Activated CD4-positive, alpha-beta memory T cell treated with anti-CD3 and anti-CD28 coated beads for 36 hours (primary cell): ENCODE measurements at regions of chr4 and their contacts with region 1.

Region 1: DNA sequence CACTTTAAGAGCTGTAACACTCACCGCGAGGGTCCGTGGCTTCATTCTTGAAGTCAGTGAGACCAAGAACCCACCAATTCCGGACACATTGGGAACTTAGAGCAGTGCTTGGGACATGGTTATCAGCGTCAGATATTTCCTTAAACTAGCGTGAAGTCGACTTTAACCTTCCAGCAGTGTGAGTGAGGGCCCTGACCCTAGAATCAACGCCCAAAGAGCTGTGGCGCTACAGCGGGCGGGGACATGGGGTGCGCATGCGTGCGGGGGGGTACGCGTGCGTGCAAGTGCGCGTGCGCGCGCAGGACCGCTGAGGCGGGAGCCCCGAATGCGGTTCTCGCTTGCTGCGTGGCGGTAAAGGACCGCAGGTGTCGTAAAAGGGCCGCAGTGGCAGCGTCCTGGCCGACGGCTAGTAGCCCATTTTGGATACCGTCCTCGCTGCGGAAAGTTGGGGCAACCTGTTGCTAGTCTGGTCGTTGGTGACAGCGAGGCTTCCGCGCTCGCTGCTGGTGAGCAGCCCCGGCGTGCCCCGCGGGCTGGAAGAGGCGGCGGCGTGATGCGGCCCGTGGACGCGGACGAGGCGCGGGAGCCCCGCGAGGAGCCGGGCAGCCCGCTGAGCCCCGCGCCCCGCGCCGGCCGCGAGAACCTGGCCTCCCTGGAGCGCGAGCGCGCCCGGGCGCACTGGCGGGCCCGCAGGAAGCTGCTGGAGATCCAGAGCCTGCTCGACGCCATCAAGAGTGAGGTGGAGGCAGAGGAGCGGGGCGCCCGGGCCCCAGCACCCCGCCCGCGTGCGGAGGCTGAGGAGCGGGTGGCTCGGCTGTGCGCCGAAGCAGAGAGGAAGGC is 19.8 kb upstream of the S100P start:
- DNase-seq: peak; percentile 96
- H3K4me3 Mint-ChIP-seq: peak overlapping the region; percentile 95
- H3K27ac Mint-ChIP-seq: peak overlapping the region; percentile 93
- H3K4me1 Mint-ChIP-seq: peaks cover 43% of the 10 kb centered on the region
- H3K27me3 Mint-ChIP-seq: peaks cover 2% of the 10 kb centered on the region

Region 2: GRCh38 chr4:6085691-6086628 is 587.9 kb before region 1 on chr4:
- CTCF ChIA-PET with region 1: no interaction called
- POLR2A ChIA-PET with region 1: no interaction called
- intact Hi-C with region 1: no loop called
- DNase-seq: no peak
- H3K4me3 Mint-ChIP-seq: no peak overlapping the region
- H3K27ac Mint-ChIP-seq: no peak overlapping the region
- H3K4me1 Mint-ChIP-seq: no peaks in the 10 kb centered on the region
- H3K27me3 Mint-ChIP-seq: no peaks in the 10 kb centered on the region

Region 3: GRCh38 chr4:6658597-6659075 is 15.2 kb before region 1 on chr4:
- CTCF ChIA-PET with region 1: interaction called, 34 read pairs
- POLR2A ChIA-PET with region 1: interaction called, 8 read pairs
- intact Hi-C with region 1: no loop called
- DNase-seq: peak; percentile 63
- H3K4me3 Mint-ChIP-seq: peak overlapping the region; percentile 54
- H3K27ac Mint-ChIP-seq: no peak overlapping the region
- H3K4me1 Mint-ChIP-seq: peaks cover 18% of the 10 kb centered on the region
- H3K27me3 Mint-ChIP-seq: no peaks in the 10 kb centered on the region

Region 4: DNA sequence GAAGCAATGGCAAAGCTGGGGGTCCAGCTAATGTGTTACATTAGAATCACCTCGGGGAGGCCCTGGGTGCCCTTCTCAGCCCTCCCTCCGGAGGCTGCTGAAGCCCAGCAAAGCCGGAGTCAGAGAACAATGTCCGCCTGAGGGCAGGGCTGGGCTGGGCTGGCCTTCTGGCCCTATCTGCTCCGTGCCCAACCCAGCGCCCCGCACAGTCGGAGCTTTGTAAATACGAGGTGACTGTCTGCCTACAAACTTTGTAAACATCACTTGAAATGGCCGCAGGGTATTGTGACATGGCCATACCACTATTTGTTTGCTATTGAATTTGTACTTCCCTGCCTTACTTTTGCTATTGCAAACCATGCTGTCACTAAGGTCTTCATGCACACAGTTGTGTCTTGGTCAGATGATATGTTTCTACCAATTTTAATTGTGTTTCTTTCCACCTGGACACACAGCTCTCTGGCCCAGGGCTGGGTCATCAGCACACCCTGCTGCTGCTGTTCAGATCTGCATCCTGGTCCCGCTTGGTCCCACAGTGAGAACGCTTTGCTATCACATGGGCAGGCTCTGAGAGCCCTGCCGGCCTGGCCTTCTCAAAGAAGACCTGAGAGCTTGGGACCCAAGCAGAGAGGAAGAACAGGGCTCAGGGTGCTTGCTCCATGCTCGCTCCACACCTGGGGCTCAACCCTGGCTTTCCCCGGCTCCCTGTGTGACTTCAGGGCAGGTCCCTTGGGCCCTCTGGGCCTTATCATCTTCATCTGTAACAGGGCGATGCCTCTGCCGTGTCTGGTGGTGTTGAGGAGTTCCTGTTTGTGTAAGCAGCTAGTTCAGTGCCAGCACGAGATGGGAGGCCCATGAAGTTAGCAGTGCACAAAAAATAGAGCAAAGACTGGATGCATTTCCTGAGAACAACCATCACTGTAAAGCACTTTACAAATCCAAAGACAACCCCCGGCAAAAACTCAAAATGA is 22.1 kb after region 1 on chr4:
- CTCF ChIA-PET with region 1: interaction called, 138 read pairs
- POLR2A ChIA-PET with region 1: interaction called, 39 read pairs
- intact Hi-C with region 1: loop called (anchors 1 kb)
- DNase-seq: peak; percentile 76
- H3K4me3 Mint-ChIP-seq: peak overlapping the region; percentile 69
- H3K27ac Mint-ChIP-seq: peak overlapping the region; percentile 98
- H3K4me1 Mint-ChIP-seq: peaks cover 79% of the 10 kb centered on the region
- H3K27me3 Mint-ChIP-seq: no peaks in the 10 kb centered on the region

Region 5: DNA sequence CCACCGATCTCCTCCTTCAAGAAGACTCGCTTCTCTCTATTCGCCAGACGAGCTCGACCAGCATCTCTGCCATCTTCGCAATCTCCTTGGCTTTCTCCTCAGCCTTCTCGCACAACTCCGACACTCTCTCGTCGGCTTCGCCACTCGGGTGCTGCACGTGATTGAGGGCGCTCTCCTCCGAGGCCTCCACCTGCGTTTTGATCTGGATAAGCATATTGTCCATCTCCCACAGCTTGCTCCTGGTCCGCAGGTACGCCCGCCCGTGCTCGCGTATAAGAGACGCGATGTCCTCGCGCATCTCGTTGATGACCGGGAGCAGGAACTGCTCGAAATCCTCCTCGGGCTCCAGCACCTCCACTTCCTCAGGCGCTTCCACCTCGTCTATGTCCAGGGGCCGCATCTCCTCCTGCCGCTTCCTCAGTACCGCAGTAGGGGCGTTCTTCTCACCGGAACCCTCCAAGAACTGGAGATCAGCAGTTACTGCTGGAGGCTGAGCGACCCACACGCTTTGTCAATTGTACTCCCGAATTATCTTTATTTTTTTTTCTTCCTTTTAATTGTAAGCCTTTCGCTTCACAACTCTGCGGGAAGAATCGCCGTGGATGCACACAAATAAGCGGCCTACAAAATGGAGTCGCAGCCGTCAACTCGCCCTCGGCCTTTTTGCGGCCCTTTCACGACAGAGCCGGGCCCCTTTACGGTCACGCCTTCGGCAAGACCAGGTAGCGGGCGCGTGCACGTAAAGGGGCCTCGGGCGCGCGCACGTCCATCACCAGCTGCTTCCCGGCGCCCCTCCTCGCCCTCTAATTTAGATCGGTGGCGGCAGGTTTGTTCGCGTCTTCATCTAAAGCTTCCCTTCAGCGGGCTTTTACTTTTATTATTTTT is 35.6 kb after region 1 on chr4 and contains the start of gene MRFAP1L1:
- CTCF ChIA-PET with region 1: interaction called, 96 read pairs
- POLR2A ChIA-PET with region 1: interaction called, 75 read pairs
- intact Hi-C with region 1: loop called (anchors 1 kb)
- DNase-seq: peak; percentile 98
- H3K4me3 Mint-ChIP-seq: peak within 1 kb of the TSS; percentile 99
- H3K27ac Mint-ChIP-seq: peak within 1 kb of the TSS; percentile 95
- H3K4me1 Mint-ChIP-seq: peaks cover 49% of the 10 kb centered on the region
- H3K27me3 Mint-ChIP-seq: no peaks in the 10 kb centered on the region
- total RNA-seq, gene MRFAP1L1: 50.7 to 52.0 TPM

Region 6: DNA sequence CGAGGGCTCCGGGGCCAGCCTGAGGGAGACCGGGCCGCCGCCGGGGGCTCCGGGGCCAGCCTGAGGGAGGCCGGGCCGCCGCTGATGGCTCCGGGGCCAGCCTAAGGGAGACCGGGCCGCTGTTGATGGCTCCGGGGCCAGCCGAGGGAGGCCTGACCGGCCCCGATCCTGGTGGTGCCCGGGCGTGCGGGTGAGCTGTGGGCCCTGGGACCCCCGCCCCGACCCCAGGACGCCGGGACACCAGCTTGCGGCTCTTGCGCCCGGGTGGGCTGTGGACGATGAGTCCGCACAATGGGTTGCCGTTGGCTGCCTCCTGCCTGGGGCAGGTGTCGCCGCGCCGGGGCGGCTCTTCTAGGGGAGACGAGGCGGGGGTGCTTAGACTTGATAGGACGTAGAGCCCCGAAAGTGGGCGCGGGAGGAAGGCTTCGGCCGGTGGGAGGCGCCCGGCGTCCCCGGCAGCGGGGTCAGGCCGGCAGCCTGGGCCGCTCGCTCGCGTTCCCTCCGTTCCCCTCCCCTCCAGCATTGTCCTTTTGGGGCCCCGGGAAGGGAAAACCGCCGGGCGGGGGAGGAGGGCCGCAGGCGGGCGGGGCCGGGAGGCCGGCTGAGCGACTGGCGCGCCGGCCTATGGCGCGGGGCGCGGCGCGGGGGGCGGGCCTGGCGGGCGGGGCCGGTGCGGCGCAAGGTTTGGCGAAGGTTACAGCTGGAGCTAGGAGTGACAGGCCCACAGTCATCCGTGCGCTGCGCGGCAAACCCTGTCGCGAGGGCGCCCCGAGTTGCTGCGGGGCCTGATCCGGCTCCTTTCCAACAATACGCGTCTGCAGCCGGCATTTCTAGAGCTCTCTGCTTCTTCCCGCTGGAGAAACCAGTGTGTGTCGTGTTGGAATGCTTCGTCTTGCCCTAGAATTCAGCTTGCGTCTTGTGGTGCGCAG is 109.4 kb after region 1 on chr4:
- CTCF ChIA-PET with region 1: interaction called, 3 read pairs
- POLR2A ChIA-PET with region 1: no interaction called
- intact Hi-C with region 1: loop called (anchors 1 kb)
- DNase-seq: peak; percentile 94
- H3K4me3 Mint-ChIP-seq: peak overlapping the region; percentile 80
- H3K27ac Mint-ChIP-seq: peak overlapping the region; percentile 77
- H3K4me1 Mint-ChIP-seq: peaks cover 47% of the 10 kb centered on the region
- H3K27me3 Mint-ChIP-seq: no peaks in the 10 kb centered on the region